Astrocyte of the cerebellum (primary cell): ENCODE measurements at regions of chr1 and their contacts with region 1.

Region 1: DNA sequence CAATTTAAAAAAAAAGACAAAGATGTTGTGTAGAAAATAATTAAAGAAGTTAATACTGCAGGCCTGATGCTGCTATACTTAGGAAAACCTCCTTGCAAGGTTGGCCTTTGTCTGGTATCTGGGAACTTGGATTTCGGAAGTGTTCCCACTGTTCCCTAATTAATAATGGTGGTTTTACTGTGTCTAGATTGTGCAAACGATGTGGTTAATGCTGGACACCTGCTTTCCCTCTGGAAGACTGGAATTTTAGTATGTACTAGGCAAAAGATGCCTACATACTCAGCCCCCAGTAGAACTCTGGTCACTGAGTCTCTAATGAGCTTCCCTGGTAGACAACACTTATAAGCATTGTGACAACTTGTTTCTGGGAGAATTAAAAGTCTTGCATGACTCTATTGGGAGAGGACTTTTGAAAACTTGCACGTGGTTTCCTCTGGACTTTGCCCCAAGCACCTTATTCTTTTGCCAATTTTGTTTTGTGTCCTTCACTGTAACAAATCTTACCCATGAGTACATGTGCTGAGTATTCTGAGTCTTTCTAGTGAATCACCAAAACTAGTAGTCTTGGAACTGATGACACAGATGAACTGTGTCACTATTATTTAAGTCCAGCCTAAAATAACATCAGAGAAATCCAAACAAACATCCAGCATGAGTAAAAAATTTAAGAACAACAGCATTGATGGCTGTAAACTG is 40.4 kb downstream of the LIN9 start:
- DNase-seq: no peak
- H3K4me3 ChIP-seq: no peak overlapping the region
- CTCF ChIP-seq: no peak

Region 2: GRCh38 chr1:226304291-226304955 is 35.9 kb after region 1 on chr1:
- in situ Hi-C with region 1: loop called (anchors 5 kb)
- DNase-seq: no peak
- H3K4me3 ChIP-seq: no peak overlapping the region
- CTCF ChIP-seq: no peak